Mammary epithelial cell (primary cell): ENCODE measurements at regions of chr10 and their contacts with region 1.

Region 1: GRCh38 chr10:84537447-84537931 is 209.1 kb downstream of the CCSER2 start:
- DNase-seq: peak; percentile 32
- H3K4me3 ChIP-seq: no peak overlapping the region
- H3K27ac ChIP-seq: no peak overlapping the region
- H3K4me1 ChIP-seq: peaks cover 36% of the 10 kb centered on the region
- H3K27me3 ChIP-seq: no peaks in the 10 kb centered on the region
- CTCF ChIP-seq: peak; percentile 48 to 72

Region 2: DNA sequence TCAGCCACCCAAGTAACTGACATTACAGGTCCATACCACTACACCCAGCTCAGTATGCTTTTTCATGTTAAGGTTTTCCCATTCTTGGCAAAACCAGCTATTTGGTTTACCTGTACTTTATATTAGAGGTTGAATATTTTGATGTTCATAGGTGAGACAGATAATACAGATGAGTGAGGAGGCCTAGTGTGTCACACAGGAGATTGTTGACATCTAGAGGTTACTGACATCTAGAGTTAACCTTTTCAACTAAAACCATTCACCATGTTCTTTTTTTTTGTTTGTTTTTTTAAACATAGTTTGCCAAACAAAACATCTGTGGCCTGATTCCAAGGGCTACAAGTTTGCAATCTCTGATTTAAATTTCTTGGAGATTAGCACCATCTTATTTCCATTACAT is 390.1 kb before region 1 on chr10:
- CTCF ChIA-PET with region 1: no interaction called
- dilution Hi-C with region 1: no loop called
- in situ Hi-C with region 1: no loop called
- intact Hi-C with region 1: loop called (anchors 5 kb)
- DNase-seq: no peak
- H3K4me3 ChIP-seq: no peak overlapping the region
- H3K27ac ChIP-seq: no peak overlapping the region
- H3K4me1 ChIP-seq: no peaks in the 10 kb centered on the region
- H3K27me3 ChIP-seq: no peaks in the 10 kb centered on the region
- CTCF ChIP-seq: no peak

Region 3: DNA sequence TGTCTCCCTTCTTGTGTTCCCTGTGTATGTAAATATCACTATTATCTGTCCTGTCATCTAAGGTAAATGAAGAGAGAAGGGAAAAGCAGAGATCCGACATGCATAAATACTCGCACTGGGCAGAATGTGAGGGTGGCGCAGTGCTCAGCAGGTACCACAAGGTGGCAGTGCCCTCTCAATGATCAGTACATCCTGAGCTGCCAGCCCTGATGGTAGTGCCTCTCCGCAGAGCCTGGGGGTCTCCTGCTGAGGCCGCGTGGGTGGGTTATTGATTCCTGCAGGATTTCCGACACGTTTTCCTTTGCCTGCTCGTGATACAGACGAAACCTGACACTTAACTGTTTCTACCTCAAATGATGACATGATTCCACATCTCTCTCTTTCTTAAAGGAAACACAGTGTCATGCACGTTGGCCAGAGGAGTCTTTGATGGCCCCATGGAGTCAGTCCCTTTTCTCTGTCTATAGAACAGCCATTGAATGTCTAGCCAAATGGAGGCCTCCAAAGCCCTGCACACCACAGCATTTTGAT is 272.8 kb before region 1 on chr10:
- CTCF ChIA-PET with region 1: interaction called, 14 read pairs
- dilution Hi-C with region 1: no loop called
- in situ Hi-C with region 1: loop called (anchors 5 kb)
- intact Hi-C with region 1: loop called (anchors 1 kb)
- DNase-seq: peak; percentile 36
- H3K4me3 ChIP-seq: no peak overlapping the region
- H3K27ac ChIP-seq: no peak overlapping the region
- H3K4me1 ChIP-seq: peaks cover 3% of the 10 kb centered on the region
- H3K27me3 ChIP-seq: no peaks in the 10 kb centered on the region
- CTCF ChIP-seq: peak; percentile 98 to 99

Region 4: GRCh38 chr10:84375011-84375410 is 162.5 kb before region 1 on chr10:
- CTCF ChIA-PET with region 1: no interaction called
- dilution Hi-C with region 1: no loop called
- in situ Hi-C with region 1: loop called (anchors 10 kb)
- intact Hi-C with region 1: loop called (anchors 1 kb)
- DNase-seq: peak; percentile 51
- H3K4me3 ChIP-seq: no peak overlapping the region
- H3K27ac ChIP-seq: no peak overlapping the region
- H3K4me1 ChIP-seq: no peaks in the 10 kb centered on the region
- H3K27me3 ChIP-seq: no peaks in the 10 kb centered on the region
- CTCF ChIP-seq: peak; percentile 71 to 75

Region 5: DNA sequence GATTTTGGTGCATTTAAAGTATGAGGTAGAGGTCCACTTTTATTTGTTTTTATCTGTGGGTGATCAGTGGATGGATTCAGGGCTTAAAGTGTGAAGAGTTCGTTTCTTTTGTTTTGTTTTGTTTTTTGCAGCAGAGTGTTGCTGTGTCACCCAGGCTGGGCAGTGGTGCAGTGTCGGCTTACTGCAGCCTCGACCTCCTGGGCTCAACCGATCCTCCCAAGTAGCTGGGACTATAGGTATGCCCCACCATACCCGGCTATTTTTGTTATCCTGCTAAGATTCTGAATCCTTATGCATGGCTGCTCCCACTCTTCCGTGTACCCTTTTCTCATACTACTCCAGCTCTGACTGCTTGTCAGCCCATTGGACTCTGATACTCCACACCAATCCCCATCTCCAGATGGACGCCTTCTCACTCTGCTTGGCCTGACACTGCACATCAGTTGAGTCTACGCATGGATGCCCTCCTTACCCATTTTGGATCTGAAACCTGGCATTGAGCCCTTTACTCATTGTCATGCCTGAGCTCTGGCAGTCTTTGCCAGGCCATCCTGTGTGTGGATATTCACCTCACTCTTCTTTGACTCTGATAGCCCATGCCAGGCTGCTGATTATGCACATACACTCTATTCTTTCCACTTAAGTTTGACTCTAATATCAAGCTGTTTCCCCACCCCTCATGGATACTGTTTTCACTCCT is 89.6 kb before region 1 on chr10:
- CTCF ChIA-PET with region 1: no interaction called
- dilution Hi-C with region 1: no loop called
- in situ Hi-C with region 1: no loop called
- intact Hi-C with region 1: no loop called
- DNase-seq: no peak
- H3K4me3 ChIP-seq: no peak overlapping the region
- H3K27ac ChIP-seq: no peak overlapping the region
- H3K4me1 ChIP-seq: no peaks in the 10 kb centered on the region
- H3K27me3 ChIP-seq: no peaks in the 10 kb centered on the region
- CTCF ChIP-seq: no peak

Region 6: DNA sequence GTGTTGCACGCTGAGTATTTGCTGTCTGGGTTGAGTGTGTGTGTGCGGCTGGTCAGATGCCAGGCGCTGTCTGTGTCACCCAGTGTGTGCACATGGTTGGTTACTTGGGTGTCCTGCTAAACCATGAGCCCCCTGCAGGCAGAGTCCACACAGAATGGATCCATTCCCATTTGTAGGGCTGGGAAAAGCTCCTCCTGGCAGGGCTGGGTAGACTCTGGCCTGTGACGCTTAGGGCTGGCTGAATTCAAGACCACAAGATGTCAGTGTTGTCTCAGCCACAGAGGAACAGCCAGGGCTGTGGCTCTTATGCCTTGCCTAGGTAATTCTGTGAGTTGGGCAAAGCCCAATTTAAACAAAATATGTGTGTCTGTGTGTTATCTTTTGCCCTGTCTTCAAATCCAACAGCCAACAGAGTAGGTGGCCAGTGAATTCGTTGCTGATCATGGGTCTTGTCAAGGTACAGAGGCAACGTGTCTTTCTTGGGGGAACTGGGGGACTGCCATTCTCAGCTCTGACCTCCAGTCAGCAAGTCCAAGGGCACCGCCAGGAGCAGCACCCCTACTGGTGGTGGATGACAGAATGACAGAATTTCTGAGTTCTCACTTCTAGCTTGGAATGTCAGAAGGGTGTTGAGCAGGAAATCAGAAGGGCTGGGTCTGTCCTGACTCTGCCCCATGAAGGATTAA is 76.0 kb after region 1 on chr10:
- CTCF ChIA-PET with region 1: no interaction called
- dilution Hi-C with region 1: no loop called
- in situ Hi-C with region 1: no loop called
- intact Hi-C with region 1: loop called (anchors 1 kb)
- DNase-seq: peak; percentile 51
- H3K4me3 ChIP-seq: no peak overlapping the region
- H3K27ac ChIP-seq: no peak overlapping the region
- H3K4me1 ChIP-seq: no peaks in the 10 kb centered on the region
- H3K27me3 ChIP-seq: no peaks in the 10 kb centered on the region
- CTCF ChIP-seq: peak; percentile 51 to 72

Region 7: GRCh38 chr10:84743483-84743882 is 206.0 kb after region 1 on chr10:
- CTCF ChIA-PET with region 1: no interaction called
- dilution Hi-C with region 1: no loop called
- in situ Hi-C with region 1: no loop called
- intact Hi-C with region 1: loop called (anchors 1 kb)
- DNase-seq: no peak
- H3K4me3 ChIP-seq: no peak overlapping the region
- H3K27ac ChIP-seq: no peak overlapping the region
- H3K4me1 ChIP-seq: no peaks in the 10 kb centered on the region
- H3K27me3 ChIP-seq: no peaks in the 10 kb centered on the region
- CTCF ChIP-seq: peak; percentile 51 to 69

Region 8: DNA sequence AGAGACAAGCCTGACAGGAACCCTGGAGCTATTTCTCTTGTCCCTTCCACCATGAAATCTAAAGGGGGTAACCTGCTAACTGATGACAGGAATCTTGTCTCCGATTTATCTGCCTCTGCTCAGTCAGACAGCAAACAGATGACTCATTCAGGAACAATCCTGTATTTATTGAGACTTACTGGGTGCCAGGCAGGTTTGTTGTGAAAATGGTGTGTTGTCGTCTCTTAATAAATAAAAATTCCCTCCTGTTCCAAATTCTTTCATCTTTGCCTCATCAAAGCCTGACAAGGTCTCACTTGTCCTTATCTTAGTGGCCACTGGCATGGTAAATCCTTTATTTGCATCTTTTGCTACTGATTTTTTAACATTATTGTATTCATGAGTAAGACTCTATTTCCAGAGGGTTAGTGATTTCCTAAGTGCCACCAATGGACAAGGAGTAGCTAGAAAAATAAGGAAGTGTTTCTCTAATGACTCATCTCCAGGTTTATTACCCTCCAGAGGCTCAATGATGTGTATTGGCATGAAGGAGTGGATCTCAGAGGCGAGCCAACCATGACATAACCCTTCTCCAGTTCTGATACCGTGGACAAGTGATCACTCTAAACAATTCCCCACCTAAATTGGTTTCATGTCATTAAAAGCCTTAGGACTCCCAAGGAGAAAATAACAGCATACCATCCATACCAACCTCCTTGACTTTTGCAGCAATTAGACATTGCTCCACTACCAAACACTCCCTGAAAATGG is 1105.1 kb after region 1 on chr10:
- CTCF ChIA-PET with region 1: no interaction called
- dilution Hi-C with region 1: no loop called
- in situ Hi-C with region 1: no loop called
- intact Hi-C with region 1: loop called (anchors 10 kb)
- DNase-seq: peak; percentile 80
- H3K4me3 ChIP-seq: no peak overlapping the region
- H3K27ac ChIP-seq: peak overlapping the region; percentile 83
- H3K4me1 ChIP-seq: peaks cover 33% of the 10 kb centered on the region
- H3K27me3 ChIP-seq: no peaks in the 10 kb centered on the region
- CTCF ChIP-seq: no peak